ENCODE measurements at regions of chr17 and their contacts with region 1.

Region 1: GRCh38 chr17:44533533-44534246 is 23.6 kb upstream of the FZD2 start:
- DNase-seq: peak; percentile 94
- ATAC-seq: peak; percentile 84

Region 2: GRCh38 chr17:44279666-44280391 is 253.9 kb before region 1 on chr17:
- intact Hi-C with region 1: no loop called
- DNase-seq: peak; percentile 84
- ATAC-seq: peak; percentile 91

Region 3: DNA sequence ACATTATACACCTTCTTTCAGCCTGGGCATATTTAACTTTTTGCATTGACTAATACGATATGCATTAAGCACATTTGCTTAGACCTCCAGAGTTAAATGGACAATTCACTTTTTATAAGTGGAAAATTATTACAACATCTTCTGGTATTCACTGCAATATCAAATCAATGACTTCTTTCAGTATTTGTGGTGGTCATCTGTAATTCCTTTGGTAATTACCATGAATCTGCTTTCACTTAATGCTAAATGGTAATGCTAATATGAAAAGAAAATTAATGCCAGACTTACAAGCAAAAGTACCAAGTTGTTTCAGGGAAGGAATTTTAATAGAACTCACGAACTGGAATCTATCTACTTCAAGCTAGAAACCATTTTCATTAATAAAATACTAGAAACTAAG is 36.9 kb before region 1 on chr17:
- intact Hi-C with region 1: no loop called
- DNase-seq: no peak
- ATAC-seq: no peak

Region 4: GRCh38 chr17:44636562-44636961 is 102.9 kb after region 1 on chr17:
- intact Hi-C with region 1: loop called (anchors 1 kb)
- DNase-seq: no peak
- ATAC-seq: no peak

Region 5: GRCh38 chr17:44672479-44673093 is 138.9 kb after region 1 on chr17:
- intact Hi-C with region 1: loop called (anchors 1 kb)
- DNase-seq: no peak
- ATAC-seq: no peak

Measured in Right ventricle myocardium inferior (tissue), 1 donor.